ENCODE measurements at regions of chr15 and their contacts with region 1.

Region 1: GRCh38 chr15:50953302-50953701 is 44.8 kb downstream of the AP4E1 start:
- DNase-seq: no peak
- H3K4me3 ChIP-seq: no peak overlapping the region
- H3K27ac ChIP-seq: no peak overlapping the region
- H3K4me1 ChIP-seq: peaks cover 0 to 3% (median 0%) of the 10 kb centered on the region in 4 donors
- H3K27me3 ChIP-seq: no peaks in the 10 kb centered on the region
- CTCF ChIP-seq: no peak
- EP300 ChIP-seq: no peak
- POLR2A ChIP-seq: no peak

Region 2: GRCh38 chr15:51051776-51052175 is 98.5 kb after region 1 on chr15:
- in situ Hi-C with region 1: loop called in 1 of 4 experiments (anchors 25 kb)
- intact Hi-C with region 1: no loop called
- DNase-seq: peak; percentile 19
- H3K4me3 ChIP-seq: no peak overlapping the region
- H3K27ac ChIP-seq: no peak overlapping the region
- H3K4me1 ChIP-seq: peaks cover 7 to 32% (median 13%) of the 10 kb centered on the region in 4 donors
- H3K27me3 ChIP-seq: no peaks in the 10 kb centered on the region
- CTCF ChIP-seq: no peak
- EP300 ChIP-seq: no peak
- POLR2A ChIP-seq: no peak